ENCODE measurements at regions of chr11 and their contacts with region 1.

Region 1: GRCh38 chr11:69048718-69049489 is at the start of gene TPCN2:
- DNase-seq: peak; percentile 95 to 97
- ATAC-seq: peak; percentile 96
- H3K4me3 ChIP-seq: peak within 1 kb of the TSS; percentile 43 to 72
- H3K27ac ChIP-seq: peak within 1 kb of the TSS; percentile 43 to 57
- H3K4me1 ChIP-seq: no peaks in the 10 kb centered on the region
- H3K27me3 ChIP-seq: no peaks in the 10 kb centered on the region
- total RNA-seq, gene TPCN2: 25.8 to 27.9 TPM

Region 2: GRCh38 chr11:68878022-68878421 is 170.9 kb before region 1 on chr11:
- intact Hi-C with region 1: no loop called
- DNase-seq: no peak
- ATAC-seq: no peak
- H3K4me3 ChIP-seq: no peak overlapping the region
- H3K27ac ChIP-seq: no peak overlapping the region
- H3K4me1 ChIP-seq: peaks cover 0 to 8% of the 10 kb centered on the region in 2 donors
- H3K27me3 ChIP-seq: no peaks in the 10 kb centered on the region

Region 3: DNA sequence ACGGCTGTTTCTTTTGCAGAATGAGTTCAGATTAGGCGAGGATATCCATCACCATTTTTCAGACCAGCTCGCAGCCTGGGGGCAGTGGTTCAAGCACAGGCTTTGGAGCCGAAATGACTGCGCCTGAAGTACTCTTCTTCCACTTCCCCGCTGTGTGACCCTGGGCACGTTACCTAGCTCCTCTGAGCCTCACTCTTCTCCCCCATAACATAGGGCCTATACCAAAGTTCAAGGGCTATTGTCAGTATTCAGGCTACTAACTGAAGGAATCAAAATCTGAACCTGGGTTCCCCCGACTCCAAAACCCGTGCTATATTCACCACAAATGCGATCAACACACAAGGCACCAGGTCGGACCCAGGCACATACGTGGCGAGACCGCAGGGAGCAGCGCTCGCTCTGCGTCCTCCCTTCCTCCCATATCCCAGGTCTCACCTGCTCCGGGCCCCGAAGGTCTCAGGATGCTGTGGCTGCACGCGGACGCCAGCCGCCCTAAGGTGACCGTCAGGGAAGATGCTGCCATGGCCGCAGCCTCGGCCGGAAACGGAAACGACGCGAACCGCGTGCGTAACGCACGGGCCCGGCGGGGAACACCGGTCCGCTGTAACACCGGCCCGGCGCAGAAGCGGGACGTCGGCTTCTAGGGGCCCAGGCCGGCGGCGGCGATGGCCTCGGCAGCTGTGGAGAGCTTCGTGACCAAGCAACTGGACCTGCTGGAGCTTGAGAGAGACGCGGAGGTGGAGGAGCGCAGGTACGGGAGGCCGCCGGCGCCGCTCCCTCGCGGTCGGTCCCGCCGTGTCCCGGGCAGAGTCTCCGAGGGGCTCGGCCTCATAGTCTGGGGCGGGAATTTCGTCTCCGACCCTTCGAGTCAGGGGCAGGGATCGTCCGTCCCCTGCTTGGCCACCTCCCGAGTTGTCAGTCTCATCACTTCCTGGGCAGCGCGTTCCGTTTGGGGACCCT is 145.3 kb before region 1 on chr11 and contains the starts of genes IGHMBP2 and MRPL21:
- intact Hi-C with region 1: loop called in 1 of 2 experiments (anchors 5 kb)
- DNase-seq: peak; percentile 88 to 95
- ATAC-seq: peak; percentile 98
- H3K4me3 ChIP-seq: peak within 1 kb of the TSS; percentile 7 to 79
- H3K27ac ChIP-seq: peak within 1 kb of the TSS; percentile 0 to 4
- H3K4me1 ChIP-seq: no peaks in the 10 kb centered on the region
- H3K27me3 ChIP-seq: no peaks in the 10 kb centered on the region
- total RNA-seq, gene IGHMBP2: 24.6 to 33.6 TPM
- total RNA-seq, gene MRPL21: 31.7 to 37.0 TPM

Region 4: GRCh38 chr11:68927280-68928135 is 121.4 kb before region 1 on chr11:
- intact Hi-C with region 1: loop called in 1 of 2 experiments (anchors 10 kb)
- DNase-seq: peak; percentile 57 to 74
- ATAC-seq: peak; percentile 40
- H3K4me3 ChIP-seq: no peak overlapping the region
- H3K27ac ChIP-seq: peak overlapping the region in 1 of 2 donors; percentile 4
- H3K4me1 ChIP-seq: peaks cover 0 to 3% of the 10 kb centered on the region in 2 donors
- H3K27me3 ChIP-seq: no peaks in the 10 kb centered on the region

Measured in aorta (tissue), 5 donors.